ENCODE measurements at regions of chr12 and their contacts with region 1.

Region 1: DNA sequence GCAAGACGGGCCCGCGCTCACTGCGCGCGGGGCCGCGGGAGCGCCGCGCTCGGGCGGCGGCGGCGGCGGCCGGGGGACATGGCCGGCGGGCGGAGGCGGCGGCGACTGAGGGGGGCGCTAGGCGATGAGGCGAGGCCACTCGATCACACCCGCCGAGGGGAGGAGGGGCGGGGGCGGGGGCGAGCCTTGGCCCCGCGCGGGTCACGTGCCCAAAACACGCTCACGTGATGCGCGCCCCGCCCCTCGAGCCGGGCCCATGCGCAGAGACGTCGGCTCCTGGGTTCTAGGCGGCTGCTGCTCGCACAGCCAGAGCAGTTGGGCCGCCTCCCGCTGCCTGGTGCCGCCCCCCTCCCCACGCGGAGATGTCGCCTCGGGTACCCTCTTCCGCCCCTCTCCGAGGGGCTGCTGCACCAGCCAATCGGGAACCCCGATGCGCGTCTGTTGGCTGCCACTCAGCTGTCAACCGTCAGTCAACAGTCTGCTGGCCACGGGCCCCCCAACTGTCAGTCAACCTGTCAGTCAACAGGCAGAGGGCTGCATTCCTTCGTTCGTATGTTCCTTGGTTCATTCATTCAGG is at the start of gene SPPL3:
- DNase-seq: peak; percentile 79 to 96 (median 87)
- ATAC-seq: peak; percentile 93
- H3K4me3 ChIP-seq: peak within 1 kb of the TSS; percentile 88
- H3K4me3 Mint-ChIP-seq: peak within 1 kb of the TSS; percentile 95 to 100 (median 99)
- H3K27ac ChIP-seq: peak within 1 kb of the TSS; percentile 90
- H3K27ac Mint-ChIP-seq: peak within 1 kb of the TSS; percentile 92 to 99 (median 95)
- H3K4me1 ChIP-seq: peaks cover 6 to 14% of the 10 kb centered on the region in 2 donors
- H3K4me1 Mint-ChIP-seq: peaks cover 25 to 42% (median 34%) of the 10 kb centered on the region in 7 donors
- H3K27me3 ChIP-seq: no peaks in the 10 kb centered on the region
- H3K27me3 Mint-ChIP-seq: no peaks in the 10 kb centered on the region
- total RNA-seq, gene SPPL3: 34.9 to 51.8 (median 48.2) TPM

Region 2: DNA sequence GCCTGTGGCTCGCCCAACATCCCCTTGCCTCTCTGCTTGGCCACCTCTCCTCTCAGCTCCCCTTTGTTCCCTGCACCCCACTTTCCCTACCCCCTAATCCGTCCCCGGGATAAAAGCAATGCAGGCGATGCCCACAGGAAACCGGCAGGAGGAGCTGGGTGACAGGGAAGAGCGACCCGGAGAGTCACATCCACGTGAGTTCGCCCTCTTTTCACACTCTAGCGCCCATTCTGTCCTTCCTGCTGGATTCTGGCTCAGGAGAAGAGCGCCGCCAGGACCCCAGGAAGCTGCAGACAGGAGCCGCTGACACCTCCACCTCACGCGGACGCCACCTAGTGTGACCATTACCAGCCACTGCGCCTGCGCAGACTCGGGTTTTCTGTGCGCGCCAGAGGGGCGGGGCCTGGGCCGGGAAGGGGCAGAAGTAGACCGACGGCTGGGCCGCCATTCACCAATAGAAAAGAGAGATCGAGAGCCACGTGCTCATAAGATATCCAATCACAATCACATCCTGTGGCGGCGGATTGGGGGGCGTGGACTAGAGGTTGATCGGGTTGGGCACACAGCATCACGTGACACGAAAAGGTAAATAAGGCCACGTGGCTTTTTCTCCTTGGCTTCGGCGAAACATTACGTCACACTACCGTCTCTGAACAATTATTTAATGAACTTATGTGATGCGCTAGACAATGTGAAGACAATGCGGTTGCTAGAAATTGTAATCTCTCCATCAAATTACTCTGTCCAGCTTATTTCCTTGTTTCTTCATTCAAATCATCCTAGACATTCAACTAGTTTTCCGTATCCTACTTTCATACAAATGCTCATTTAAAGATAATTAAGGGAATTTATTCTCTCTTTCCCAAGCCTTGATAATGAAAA is 586.8 kb before region 1 on chr12:
- CTCF ChIA-PET with region 1: no interaction called
- POLR2A ChIA-PET with region 1: no interaction called
- intact Hi-C with region 1: loop called in 1 of 2 experiments (anchors 2 kb)
- DNase-seq: peak; percentile 100
- ATAC-seq: peak; percentile 100
- H3K4me3 ChIP-seq: peak overlapping the region; percentile 81
- H3K4me3 Mint-ChIP-seq: peak overlapping the region; percentile 86 to 95 (median 93)
- H3K27ac ChIP-seq: peak overlapping the region; percentile 87
- H3K27ac Mint-ChIP-seq: peak overlapping the region; percentile 85 to 99 (median 98)
- H3K4me1 ChIP-seq: peaks cover 5 to 10% of the 10 kb centered on the region in 2 donors
- H3K4me1 Mint-ChIP-seq: peaks cover 4 to 16% (median 14%) of the 10 kb centered on the region in 7 donors
- H3K27me3 ChIP-seq: no peaks in the 10 kb centered on the region
- H3K27me3 Mint-ChIP-seq: peaks cover 0 to 4% (median 0%) of the 10 kb centered on the region in 5 donors

Region 3: DNA sequence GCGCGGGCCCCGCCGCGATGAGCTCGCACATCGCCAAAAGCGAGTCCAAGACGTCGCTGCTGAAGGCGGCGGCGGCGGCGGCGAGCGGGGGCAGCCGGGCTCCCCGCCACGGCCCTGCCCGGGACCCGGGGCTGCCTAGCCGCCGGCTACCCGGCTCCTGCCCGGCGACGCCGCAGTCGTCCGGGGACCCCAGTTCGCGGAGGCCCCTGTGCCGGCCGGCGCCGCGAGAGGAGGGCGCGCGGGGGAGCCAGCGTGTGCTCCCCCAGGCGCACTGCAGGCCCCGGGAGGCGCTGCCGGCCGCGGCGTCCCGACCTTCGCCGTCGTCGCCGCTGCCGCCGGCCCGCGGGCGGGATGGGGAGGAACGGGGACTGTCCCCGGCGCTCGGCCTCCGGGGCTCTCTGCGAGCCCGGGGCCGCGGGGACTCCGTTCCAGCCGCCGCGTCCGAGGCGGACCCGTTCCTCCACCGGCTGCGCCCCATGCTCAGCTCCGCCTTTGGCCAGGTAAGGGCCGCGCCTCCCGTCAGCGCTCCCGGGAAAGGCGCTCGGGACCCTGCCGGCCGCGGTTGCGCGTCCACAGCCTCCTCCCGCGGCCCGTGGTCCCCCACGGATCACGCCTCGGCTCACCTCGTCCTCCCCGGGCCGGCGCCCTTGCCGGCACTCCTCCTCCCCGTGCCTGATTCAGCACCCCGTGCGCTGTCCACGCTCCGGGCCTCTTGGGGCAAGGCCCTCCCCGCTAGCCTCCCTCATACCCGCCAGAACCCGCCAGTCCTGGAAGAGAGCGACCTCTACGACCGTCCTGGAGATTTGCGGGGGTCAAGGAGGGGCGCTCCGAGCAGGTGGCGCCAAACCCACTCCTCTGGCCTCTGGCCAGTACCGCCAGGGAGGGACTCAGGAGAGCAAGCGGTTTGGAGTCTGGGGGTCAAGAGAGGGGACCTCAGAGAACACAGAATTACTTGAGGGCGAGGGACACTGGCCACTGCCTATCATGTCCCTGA is 263.1 kb before region 1 on chr12:
- CTCF ChIA-PET with region 1: no interaction called
- POLR2A ChIA-PET with region 1: interaction called, 3 read pairs
- intact Hi-C with region 1: loop called in 1 of 2 experiments (anchors 5 kb)
- DNase-seq: peak; percentile 28 to 66 (median 54)
- ATAC-seq: peak; percentile 81
- H3K4me3 ChIP-seq: peak overlapping the region; percentile 44
- H3K4me3 Mint-ChIP-seq: peak overlapping the region; percentile 64 to 84 (median 73)
- H3K27ac ChIP-seq: no peak overlapping the region
- H3K27ac Mint-ChIP-seq: no peak overlapping the region
- H3K4me1 ChIP-seq: peaks cover 4 to 8% of the 10 kb centered on the region in 2 donors
- H3K4me1 Mint-ChIP-seq: peaks cover 0 to 10% (median 6%) of the 10 kb centered on the region in 7 donors
- H3K27me3 ChIP-seq: peaks cover 19 to 26% of the 10 kb centered on the region in 2 donors
- H3K27me3 Mint-ChIP-seq: peaks cover 41 to 72% (median 45%) of the 10 kb centered on the region in 5 donors

Region 4: DNA sequence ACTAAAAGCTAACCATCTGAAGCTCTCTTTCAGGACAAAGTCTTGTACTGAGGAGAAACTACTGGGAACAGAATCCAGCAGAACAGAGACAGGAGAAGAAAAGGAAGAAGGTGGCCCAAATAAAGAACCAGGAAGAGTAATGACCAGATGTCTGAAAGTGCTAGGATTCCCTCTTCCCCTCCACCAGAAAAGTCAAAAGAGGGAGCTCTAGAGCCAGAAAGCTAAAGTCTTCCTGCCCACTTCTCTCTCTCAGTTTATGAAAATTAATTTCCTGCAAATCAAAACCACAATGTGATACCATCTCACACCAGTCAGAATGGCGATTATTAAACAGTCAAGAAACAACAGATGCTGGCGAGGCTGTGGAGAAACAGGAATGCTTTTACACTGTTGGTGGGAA is 47.3 kb before region 1 on chr12:
- CTCF ChIA-PET with region 1: no interaction called
- POLR2A ChIA-PET with region 1: no interaction called
- intact Hi-C with region 1: loop called (anchors 1 to 2 kb)
- DNase-seq: peak in 1 of 9 donors; percentile 10
- ATAC-seq: peak; percentile 46
- H3K4me3 ChIP-seq: no peak overlapping the region
- H3K4me3 Mint-ChIP-seq: peak overlapping the region in 9 of 10 donors; percentile 3 to 81 (median 71)
- H3K27ac ChIP-seq: no peak overlapping the region
- H3K27ac Mint-ChIP-seq: peak overlapping the region in 5 of 9 donors; percentile 3 to 83 (median 59)
- H3K4me1 ChIP-seq: peaks cover 15 to 25% of the 10 kb centered on the region in 2 donors
- H3K4me1 Mint-ChIP-seq: peaks cover 35 to 71% (median 58%) of the 10 kb centered on the region in 7 donors
- H3K27me3 ChIP-seq: no peaks in the 10 kb centered on the region
- H3K27me3 Mint-ChIP-seq: no peaks in the 10 kb centered on the region

Region 5: GRCh38 chr12:120960657-120961056 is 56.4 kb after region 1 on chr12:
- CTCF ChIA-PET with region 1: no interaction called
- POLR2A ChIA-PET with region 1: interaction called, 3 read pairs
- intact Hi-C with region 1: loop called in 1 of 2 experiments (anchors 1 kb)
- DNase-seq: no peak
- ATAC-seq: no peak
- H3K4me3 ChIP-seq: no peak overlapping the region
- H3K4me3 Mint-ChIP-seq: peak overlapping the region in 2 of 10 donors; percentile 26 to 48
- H3K27ac ChIP-seq: no peak overlapping the region
- H3K27ac Mint-ChIP-seq: peak overlapping the region in 3 of 9 donors; percentile 55 to 89 (median 58)
- H3K4me1 ChIP-seq: peaks cover 2 to 20% of the 10 kb centered on the region in 2 donors
- H3K4me1 Mint-ChIP-seq: peaks cover 3 to 26% (median 20%) of the 10 kb centered on the region in 7 donors
- H3K27me3 ChIP-seq: no peaks in the 10 kb centered on the region
- H3K27me3 Mint-ChIP-seq: no peaks in the 10 kb centered on the region

Region 6: DNA sequence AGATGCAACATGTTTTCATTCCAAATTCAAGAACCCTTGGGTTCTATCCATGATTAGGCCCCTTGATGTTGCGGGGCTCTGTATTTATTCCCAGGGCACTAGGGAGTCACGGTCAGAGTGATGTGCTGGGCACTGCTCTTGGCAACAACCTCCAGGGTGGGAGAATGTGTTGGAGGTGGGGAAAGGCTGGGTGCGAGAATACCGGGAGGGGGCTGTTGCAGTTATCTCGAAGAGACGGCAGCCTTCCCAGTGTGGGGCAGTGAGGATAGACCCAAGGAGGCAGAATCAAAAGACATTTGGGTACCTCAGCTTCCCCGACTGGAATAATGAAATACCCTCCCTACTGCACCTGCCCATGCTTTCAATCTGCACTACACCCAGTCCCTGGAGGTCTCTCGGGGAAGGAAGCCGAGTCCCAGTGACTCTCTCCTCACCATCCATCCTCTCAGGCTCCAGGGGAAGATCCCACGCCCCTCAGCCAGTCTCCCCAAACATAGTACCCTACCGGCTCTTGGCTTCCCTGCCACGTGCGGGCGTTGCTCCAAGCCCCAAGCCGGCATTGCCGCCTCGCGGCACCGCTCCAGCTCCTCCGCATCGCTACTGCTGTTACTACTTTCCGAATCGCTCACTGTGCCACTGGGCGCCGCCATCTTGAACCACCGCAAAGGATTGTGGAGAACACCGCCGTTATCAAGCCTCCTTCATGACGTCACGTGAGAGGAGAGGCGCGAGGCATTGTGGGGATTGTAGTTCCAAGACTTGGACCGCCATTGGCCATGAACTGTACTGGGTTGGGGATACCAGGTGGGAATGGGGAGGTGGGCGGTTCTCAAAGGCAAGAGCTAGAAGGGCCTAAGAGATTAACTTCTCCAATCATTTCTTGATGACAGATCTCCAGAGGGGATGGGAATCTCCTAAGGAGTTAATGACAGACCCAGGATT is 111.8 kb after region 1 on chr12 and contains the start of gene C12orf43:
- CTCF ChIA-PET with region 1: no interaction called
- POLR2A ChIA-PET with region 1: interaction called, 3 read pairs
- intact Hi-C with region 1: loop called (anchors 1 kb)
- DNase-seq: peak; percentile 74 to 93 (median 89)
- ATAC-seq: peak; percentile 99
- H3K4me3 ChIP-seq: peak within 1 kb of the TSS; percentile 88
- H3K4me3 Mint-ChIP-seq: peak within 1 kb of the TSS; percentile 93 to 99 (median 96)
- H3K27ac ChIP-seq: peak within 1 kb of the TSS; percentile 88
- H3K27ac Mint-ChIP-seq: peak within 1 kb of the TSS; percentile 89 to 97 (median 95)
- H3K4me1 ChIP-seq: peaks cover 6 to 11% of the 10 kb centered on the region in 2 donors
- H3K4me1 Mint-ChIP-seq: peaks cover 17 to 32% (median 24%) of the 10 kb centered on the region in 7 donors
- H3K27me3 ChIP-seq: no peaks in the 10 kb centered on the region
- H3K27me3 Mint-ChIP-seq: no peaks in the 10 kb centered on the region
- total RNA-seq, gene C12orf43: 11.8 to 24.2 (median 17.5) TPM

Region 7: DNA sequence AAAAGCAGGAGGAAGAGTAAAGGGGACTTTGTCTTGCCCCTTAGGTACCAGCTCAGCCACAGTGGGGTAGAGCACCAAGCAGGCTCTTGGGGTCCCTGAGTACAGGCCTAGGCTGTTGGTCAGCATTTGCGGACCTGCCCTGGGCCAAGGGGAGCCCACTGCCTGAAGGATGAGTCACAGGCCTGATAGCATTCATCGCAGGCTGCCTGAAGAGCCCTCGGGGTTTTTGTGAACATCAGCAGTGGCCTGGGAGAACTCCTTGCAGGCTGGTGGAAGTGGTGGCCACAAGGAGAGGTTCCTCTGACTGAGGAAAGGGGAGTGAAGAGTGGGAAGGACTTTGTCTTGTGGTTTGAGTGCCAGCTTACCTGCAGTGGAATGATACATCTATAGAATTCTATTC is 203.4 kb after region 1 on chr12:
- CTCF ChIA-PET with region 1: no interaction called
- POLR2A ChIA-PET with region 1: no interaction called
- intact Hi-C with region 1: no loop called
- DNase-seq: no peak
- ATAC-seq: no peak
- H3K4me3 ChIP-seq: no peak overlapping the region
- H3K4me3 Mint-ChIP-seq: no peak overlapping the region
- H3K27ac ChIP-seq: no peak overlapping the region
- H3K27ac Mint-ChIP-seq: no peak overlapping the region
- H3K4me1 ChIP-seq: no peaks in the 10 kb centered on the region
- H3K4me1 Mint-ChIP-seq: peaks cover 3 to 12% (median 5%) of the 10 kb centered on the region in 7 donors
- H3K27me3 ChIP-seq: no peaks in the 10 kb centered on the region
- H3K27me3 Mint-ChIP-seq: peaks cover 0 to 6% (median 0%) of the 10 kb centered on the region in 5 donors

Region 8: DNA sequence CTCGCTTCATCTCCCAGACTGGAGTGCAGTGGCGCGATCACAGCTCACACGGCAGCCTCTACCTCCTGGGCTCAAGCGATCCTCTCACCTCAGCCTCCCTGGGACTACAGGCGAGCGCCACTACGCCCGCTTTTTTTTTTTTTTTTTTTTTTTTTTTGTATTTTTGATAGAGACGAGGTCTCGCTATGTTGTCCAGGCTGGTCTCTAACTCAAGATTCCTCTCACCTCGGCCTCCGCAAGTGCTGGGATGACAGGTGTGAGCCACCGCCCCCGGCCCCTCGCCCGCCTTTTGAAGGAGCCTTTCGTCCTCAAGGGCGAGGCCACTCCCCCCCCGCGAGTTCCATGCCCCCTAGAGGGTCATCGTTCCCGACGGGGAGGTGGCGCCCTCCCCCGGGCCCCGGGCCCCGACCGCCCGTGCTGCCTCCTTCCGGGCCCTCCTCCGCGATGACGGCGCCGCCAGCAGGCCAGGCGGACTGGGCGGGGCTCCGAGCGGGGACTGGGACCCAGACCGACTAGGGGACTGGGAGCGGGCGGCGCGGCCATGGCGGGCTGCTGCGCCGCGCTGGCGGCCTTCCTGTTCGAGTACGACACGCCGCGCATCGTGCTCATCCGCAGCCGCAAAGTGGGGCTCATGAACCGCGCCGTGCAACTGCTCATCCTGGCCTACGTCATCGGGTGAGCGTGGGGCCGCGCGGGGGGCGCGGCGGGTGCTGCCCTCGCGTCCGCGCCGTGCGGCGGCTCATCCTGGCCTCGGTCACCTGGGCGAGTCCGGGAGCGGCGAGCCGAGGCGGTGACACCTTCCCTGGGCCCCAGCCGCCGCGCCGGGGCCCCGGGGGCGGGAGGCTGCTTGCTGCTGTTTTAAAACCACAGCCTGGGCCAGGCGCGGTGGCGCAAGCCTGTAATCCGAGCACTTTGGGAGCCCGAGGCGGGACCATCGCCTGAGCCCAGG is 305.6 kb after region 1 on chr12 and contains the start of gene P2RX4:
- CTCF ChIA-PET with region 1: no interaction called
- POLR2A ChIA-PET with region 1: no interaction called
- intact Hi-C with region 1: loop called in 1 of 2 experiments (anchors 5 kb)
- DNase-seq: peak; percentile 77 to 90 (median 88)
- ATAC-seq: peak; percentile 87
- H3K4me3 ChIP-seq: peak within 1 kb of the TSS; percentile 85
- H3K4me3 Mint-ChIP-seq: peak within 1 kb of the TSS; percentile 79 to 96 (median 94)
- H3K27ac ChIP-seq: peak within 1 kb of the TSS; percentile 89
- H3K27ac Mint-ChIP-seq: peak within 1 kb of the TSS; percentile 90 to 100 (median 93)
- H3K4me1 ChIP-seq: peaks cover 10 to 20% of the 10 kb centered on the region in 2 donors
- H3K4me1 Mint-ChIP-seq: peaks cover 15 to 45% (median 26%) of the 10 kb centered on the region in 7 donors
- H3K27me3 ChIP-seq: no peaks in the 10 kb centered on the region
- H3K27me3 Mint-ChIP-seq: no peaks in the 10 kb centered on the region
- total RNA-seq, gene P2RX4: 34.1 to 56.9 (median 40.5) TPM

Measured in naive thymus-derived CD4-positive, alpha-beta T cell (primary cell).